IMR-90 (cell line): ENCODE measurements at regions of chr12 and their contacts with region 1.

Region 1: GRCh38 chr12:45388545-45388944 is 172.7 kb downstream of the ANO6 start:
- DNase-seq: peak; percentile 58
- ATAC-seq: peak; percentile 90
- H3K4me3 ChIP-seq: no peak overlapping the region
- H3K27ac ChIP-seq: no peak overlapping the region
- H3K4me1 ChIP-seq: no peaks in the 10 kb centered on the region
- H3K27me3 ChIP-seq: no peaks in the 10 kb centered on the region
- CTCF ChIP-seq: peak; percentile 79
- POLR2A ChIP-seq: 0 out of 2 replicates have a peak, but pooled peaks have one; percentile 37
- RAD21 ChIP-seq: peak; percentile 88

Region 2: GRCh38 chr12:45130881-45131281 is 257.7 kb before region 1 on chr12:
- CTCF ChIA-PET with region 1: no interaction called
- POLR2A ChIA-PET with region 1: no interaction called
- dilution Hi-C with region 1: no loop called
- in situ Hi-C with region 1: no loop called
- intact Hi-C with region 1: loop called (anchors 2 kb)
- DNase-seq: peak; percentile 63
- ATAC-seq: peak; percentile 92
- H3K4me3 ChIP-seq: no peak overlapping the region
- H3K27ac ChIP-seq: no peak overlapping the region
- H3K4me1 ChIP-seq: no peaks in the 10 kb centered on the region
- H3K27me3 ChIP-seq: peaks cover 9% of the 10 kb centered on the region
- CTCF ChIP-seq: peak; percentile 73
- POLR2A ChIP-seq: no peak
- RAD21 ChIP-seq: peak; percentile 88

Region 3: DNA sequence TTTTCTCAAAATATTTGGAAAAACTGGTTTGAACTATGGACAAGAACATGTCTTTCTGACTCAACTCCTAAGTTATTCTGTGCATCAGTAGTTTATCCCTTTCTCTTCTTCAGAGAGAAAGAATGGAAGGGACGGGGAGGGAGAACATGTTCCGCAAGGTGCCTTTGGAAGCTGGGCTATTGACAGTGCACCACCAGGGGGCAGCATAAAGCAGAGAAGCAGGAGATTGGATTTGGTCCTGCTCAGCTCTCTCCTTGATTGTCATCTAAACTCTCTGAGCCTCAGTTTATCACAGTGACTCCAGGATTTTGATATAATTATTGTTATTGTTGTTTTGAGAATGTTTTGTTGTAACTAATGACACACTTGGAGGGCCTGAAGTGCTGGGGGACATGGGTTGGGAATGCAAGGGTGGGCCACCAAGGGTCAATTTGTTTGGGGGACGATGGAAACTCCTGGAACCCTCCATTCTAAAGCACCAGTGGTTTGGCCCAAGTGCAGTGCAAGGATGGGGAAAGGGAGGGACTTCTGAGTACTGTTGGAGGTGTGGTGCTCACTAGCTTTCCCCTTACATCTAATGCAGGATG is 218.0 kb before region 1 on chr12:
- CTCF ChIA-PET with region 1: interaction called, 17 read pairs
- POLR2A ChIA-PET with region 1: no interaction called
- dilution Hi-C with region 1: no loop called
- in situ Hi-C with region 1: no loop called
- intact Hi-C with region 1: loop called (anchors 1 kb)
- DNase-seq: peak; percentile 77
- ATAC-seq: peak; percentile 87
- H3K4me3 ChIP-seq: no peak overlapping the region
- H3K27ac ChIP-seq: no peak overlapping the region
- H3K4me1 ChIP-seq: no peaks in the 10 kb centered on the region
- H3K27me3 ChIP-seq: peaks cover 2% of the 10 kb centered on the region; the same call in 1 of the 2 replicates
- CTCF ChIP-seq: peak; percentile 88
- POLR2A ChIP-seq: no peak
- RAD21 ChIP-seq: peak; percentile 92

Region 4: GRCh38 chr12:45183246-45183645 is 205.3 kb before region 1 on chr12:
- CTCF ChIA-PET with region 1: interaction called, 5 read pairs
- POLR2A ChIA-PET with region 1: no interaction called
- dilution Hi-C with region 1: no loop called
- in situ Hi-C with region 1: loop called (anchors 10 kb)
- intact Hi-C with region 1: no loop called
- DNase-seq: peak; percentile 31
- ATAC-seq: peak; percentile 61
- H3K4me3 ChIP-seq: no peak overlapping the region
- H3K27ac ChIP-seq: no peak overlapping the region
- H3K4me1 ChIP-seq: no peaks in the 10 kb centered on the region
- H3K27me3 ChIP-seq: no peaks in the 10 kb centered on the region
- CTCF ChIP-seq: peak; percentile 59
- POLR2A ChIP-seq: no peak
- RAD21 ChIP-seq: peak; percentile 66

Region 5: DNA sequence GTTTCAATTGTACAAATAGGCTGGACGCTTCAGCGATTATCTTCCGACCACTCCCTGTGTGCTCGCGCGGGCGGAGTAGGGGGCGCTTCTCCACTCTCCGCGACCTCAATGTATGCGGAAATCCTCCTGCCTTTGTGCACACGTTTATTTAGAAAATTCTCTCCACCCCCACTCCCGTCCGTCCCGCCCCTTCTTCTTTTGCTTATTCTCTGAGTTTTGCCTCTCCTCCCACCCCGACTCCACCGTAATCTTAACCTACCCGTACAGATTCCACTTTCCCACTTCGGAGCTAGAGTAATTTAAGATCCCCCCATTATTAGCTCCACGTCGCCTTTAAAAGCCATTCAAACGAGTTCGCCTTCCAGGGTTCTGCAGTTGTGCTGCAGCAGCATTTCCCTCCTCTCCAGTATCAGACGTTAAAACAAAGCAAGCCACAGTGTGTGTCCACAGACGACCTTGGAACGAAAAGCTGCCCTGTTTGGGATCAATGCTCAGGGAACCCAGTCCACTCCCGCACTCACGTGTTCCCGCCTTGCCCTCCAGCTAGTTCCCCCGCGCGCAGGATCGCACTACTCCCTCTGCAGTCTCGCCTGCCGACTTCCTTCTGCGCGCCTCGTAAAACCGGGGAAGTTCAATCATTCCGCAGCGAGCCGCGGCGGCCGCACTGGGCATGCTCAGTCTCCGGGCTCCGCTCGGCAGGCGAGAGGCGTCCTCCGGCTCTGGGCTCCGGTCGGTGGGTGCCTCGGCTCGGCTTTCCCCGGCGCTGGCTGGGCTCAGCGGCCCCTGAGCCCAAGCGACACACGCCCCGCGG is 172.9 kb before region 1 on chr12 and contains the start of gene ANO6:
- CTCF ChIA-PET with region 1: no interaction called
- POLR2A ChIA-PET with region 1: no interaction called
- dilution Hi-C with region 1: no loop called
- in situ Hi-C with region 1: no loop called
- intact Hi-C with region 1: loop called (anchors 1 kb)
- DNase-seq: peak; percentile 84
- ATAC-seq: peak; percentile 84
- H3K4me3 ChIP-seq: peak within 1 kb of the TSS; percentile 60
- H3K27ac ChIP-seq: peak within 1 kb of the TSS; percentile 77
- H3K4me1 ChIP-seq: peaks cover 4% of the 10 kb centered on the region; the same call in 1 of the 2 replicates
- H3K27me3 ChIP-seq: no peaks in the 10 kb centered on the region
- CTCF ChIP-seq: peak; percentile 42
- POLR2A ChIP-seq: peak; percentile 79
- RAD21 ChIP-seq: peak; percentile 42
- total RNA-seq, gene ANO6: 41.0 and 46.7 TPM in 2 replicates

Region 6: DNA sequence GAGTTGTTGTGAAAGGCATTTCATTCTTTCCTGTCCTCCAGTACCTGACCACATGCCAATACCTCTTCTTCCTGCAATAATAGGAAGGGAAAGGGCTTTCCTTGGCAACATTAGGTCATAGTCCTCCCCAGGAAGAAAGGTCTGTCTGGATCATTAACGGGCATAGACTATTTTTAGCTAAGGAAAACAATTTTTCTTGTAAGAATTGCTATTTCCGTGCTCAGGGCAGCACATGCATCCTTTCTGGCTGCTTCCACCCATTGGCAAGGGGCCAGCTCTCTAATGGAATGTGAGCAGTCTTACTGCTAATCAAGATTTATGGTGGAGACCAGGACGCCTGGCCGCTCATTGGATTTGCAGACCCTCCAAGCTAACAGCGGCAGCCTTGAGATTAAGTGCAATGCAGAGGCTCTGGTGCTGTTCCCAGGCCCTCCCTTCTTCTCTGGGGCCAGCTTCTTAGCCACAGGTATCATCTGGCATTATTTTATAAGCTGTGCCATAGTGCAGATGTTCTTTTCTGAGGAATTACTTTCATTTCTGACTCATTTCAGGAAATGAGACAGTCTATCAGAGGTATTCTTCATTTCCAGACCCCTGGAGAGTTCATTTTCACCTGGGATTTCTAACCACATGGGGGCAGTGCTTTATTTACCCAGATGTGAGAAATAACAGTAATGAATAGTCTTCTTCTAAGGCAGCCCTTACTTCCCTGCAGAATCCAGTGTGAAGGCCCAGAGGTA is 119.7 kb before region 1 on chr12:
- CTCF ChIA-PET with region 1: interaction called, 5 read pairs
- POLR2A ChIA-PET with region 1: no interaction called
- dilution Hi-C with region 1: no loop called
- in situ Hi-C with region 1: no loop called
- intact Hi-C with region 1: loop called (anchors 2 kb)
- DNase-seq: peak; percentile 82
- ATAC-seq: peak; percentile 47
- H3K4me3 ChIP-seq: no peak overlapping the region
- H3K27ac ChIP-seq: no peak overlapping the region
- H3K4me1 ChIP-seq: peaks cover 9% of the 10 kb centered on the region
- H3K27me3 ChIP-seq: no peaks in the 10 kb centered on the region
- CTCF ChIP-seq: peak; percentile 61
- POLR2A ChIP-seq: no peak
- RAD21 ChIP-seq: peak; percentile 63

Region 7: GRCh38 chr12:45284131-45284901 is 104.2 kb before region 1 on chr12:
- CTCF ChIA-PET with region 1: no interaction called
- POLR2A ChIA-PET with region 1: no interaction called
- dilution Hi-C with region 1: no loop called
- in situ Hi-C with region 1: no loop called
- intact Hi-C with region 1: loop called (anchors 5 kb)
- DNase-seq: peak; percentile 87
- ATAC-seq: peak; percentile 98
- H3K4me3 ChIP-seq: no peak overlapping the region
- H3K27ac ChIP-seq: peak overlapping the region; percentile 66
- H3K4me1 ChIP-seq: peaks cover 21% of the 10 kb centered on the region
- H3K27me3 ChIP-seq: no peaks in the 10 kb centered on the region
- CTCF ChIP-seq: peak; percentile 37
- POLR2A ChIP-seq: no peak; the same call in 1 of the 2 replicates
- RAD21 ChIP-seq: peak; percentile 40; the same call in 1 of the 2 replicates